ENCODE measurements at regions of chr20 and their contacts with region 1.

Region 1: GRCh38 chr20:23350196-23350903 is at the start of gene NXT1:
- DNase-seq: peak; percentile 98
- ATAC-seq: peak; percentile 93 to 94
- H3K4me3 ChIP-seq: peak within 1 kb of the TSS; percentile 81 to 96 (median 88)
- H3K27ac ChIP-seq: peak within 1 kb of the TSS; percentile 88 to 99 (median 96)
- H3K4me1 ChIP-seq: peaks cover 16 to 23% of the 10 kb centered on the region in 2 donors
- H3K27me3 ChIP-seq: no peaks in the 10 kb centered on the region
- CTCF ChIP-seq: no peak
- POLR2A ChIP-seq: peak; percentile 94 to 96
- total RNA-seq, gene NXT1: 15.2 to 17.9 (median 15.9) TPM

Region 2: GRCh38 chr20:22333885-22334545 is 1016.3 kb before region 1 on chr20:
- in situ Hi-C with region 1: loop called (anchors 25 kb)
- intact Hi-C with region 1: loop called (anchors 10 kb)
- DNase-seq: peak; percentile 25 to 27
- ATAC-seq: peak; percentile 82 to 83
- H3K4me3 ChIP-seq: no peak overlapping the region
- H3K27ac ChIP-seq: no peak overlapping the region
- H3K4me1 ChIP-seq: no peaks in the 10 kb centered on the region
- H3K27me3 ChIP-seq: peaks cover 0 to 8% (median 0%) of the 10 kb centered on the region in 3 donors
- CTCF ChIP-seq: peak; percentile 48 to 76 (median 58)
- POLR2A ChIP-seq: no peak

Region 3: DNA sequence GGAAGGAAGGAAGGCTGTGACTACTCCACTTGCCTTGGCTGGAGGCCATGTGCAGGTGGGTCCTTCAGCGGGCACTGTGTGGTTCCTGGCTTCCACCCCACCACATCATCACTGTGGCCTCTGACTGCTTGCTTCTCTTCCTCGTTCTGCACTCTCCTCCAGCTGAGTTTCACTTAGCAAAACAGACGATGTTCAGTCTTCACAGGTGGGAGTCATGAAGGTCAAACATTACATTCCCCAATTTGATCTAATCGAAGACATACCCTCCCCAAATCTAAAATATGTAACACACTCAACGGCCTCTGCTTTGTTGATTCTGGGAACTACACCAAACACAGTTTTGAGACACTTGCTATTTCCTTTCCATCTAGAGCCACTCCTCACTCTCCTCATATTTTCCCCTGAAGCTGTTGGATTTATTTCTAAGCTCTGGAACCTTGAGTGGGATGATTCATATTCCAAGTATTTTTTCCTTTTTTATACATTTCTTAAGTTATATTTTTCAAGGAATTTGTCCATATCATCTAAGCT is 633.5 kb before region 1 on chr20:
- in situ Hi-C with region 1: no loop called
- intact Hi-C with region 1: no loop called
- DNase-seq: no peak
- ATAC-seq: no peak
- H3K4me3 ChIP-seq: no peak overlapping the region
- H3K27ac ChIP-seq: no peak overlapping the region
- H3K4me1 ChIP-seq: no peaks in the 10 kb centered on the region
- H3K27me3 ChIP-seq: no peaks in the 10 kb centered on the region
- CTCF ChIP-seq: no peak
- POLR2A ChIP-seq: no peak

Region 4: GRCh38 chr20:23147964-23148730 is 202.2 kb before region 1 on chr20:
- in situ Hi-C with region 1: loop called in 2 of 4 experiments (anchors 10 kb)
- intact Hi-C with region 1: no loop called
- DNase-seq: peak; percentile 91 to 96
- ATAC-seq: peak; percentile 59 to 72
- H3K4me3 ChIP-seq: peak overlapping the region in 2 of 4 donors; percentile 15 to 36
- H3K27ac ChIP-seq: peak overlapping the region; percentile 94 to 99 (median 94)
- H3K4me1 ChIP-seq: peaks cover 91 to 97% of the 10 kb centered on the region in 2 donors
- H3K27me3 ChIP-seq: no peaks in the 10 kb centered on the region
- CTCF ChIP-seq: no peak
- POLR2A ChIP-seq: peak; percentile 89 to 91

Region 5: DNA sequence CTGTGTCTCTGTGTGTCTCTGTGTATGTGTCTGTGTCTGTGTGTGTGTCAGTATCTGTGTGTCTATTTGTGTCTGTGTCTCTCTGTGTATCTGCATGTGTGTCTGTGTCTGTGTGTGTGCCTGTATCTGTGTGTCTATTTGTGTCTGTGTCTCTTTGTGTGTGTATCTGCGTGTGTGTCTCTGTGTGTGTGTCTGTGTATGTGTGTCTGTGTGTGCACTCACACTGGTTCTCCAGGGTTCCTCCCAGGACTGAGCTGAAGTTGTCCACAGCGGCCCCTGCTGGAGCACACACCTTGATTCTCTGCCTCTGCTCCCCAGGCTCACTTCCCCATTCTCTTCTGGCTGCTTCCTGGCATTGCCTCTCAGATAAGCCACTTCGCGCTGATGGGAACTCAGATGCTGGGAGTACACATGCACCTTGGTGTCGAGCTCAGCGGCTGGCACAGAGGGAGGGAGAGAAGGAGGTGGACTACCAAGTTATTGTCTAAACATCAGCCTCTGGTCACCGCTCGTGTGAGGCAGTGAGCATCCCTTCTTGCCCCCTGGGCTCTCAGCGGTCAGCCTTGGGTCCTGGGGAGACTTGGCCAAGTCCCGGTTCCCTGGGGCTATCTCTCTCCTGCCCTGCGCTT is 104.7 kb before region 1 on chr20:
- in situ Hi-C with region 1: no loop called
- intact Hi-C with region 1: loop called (anchors 10 kb)
- DNase-seq: peak in 1 of 2 donors; percentile 24
- ATAC-seq: peak in 1 of 2 donors; percentile 27
- H3K4me3 ChIP-seq: no peak overlapping the region
- H3K27ac ChIP-seq: peak overlapping the region in 2 of 4 donors; percentile 39 to 50
- H3K4me1 ChIP-seq: peaks cover 0 to 5% of the 10 kb centered on the region in 2 donors
- H3K27me3 ChIP-seq: no peaks in the 10 kb centered on the region
- CTCF ChIP-seq: peak in 4 of 5 experiments; percentile 4 to 37 (median 27)
- POLR2A ChIP-seq: no peak

Region 6: GRCh38 chr20:23320317-23320716 is 30.0 kb before region 1 on chr20:
- in situ Hi-C with region 1: no loop called
- intact Hi-C with region 1: no loop called
- DNase-seq: no peak
- ATAC-seq: no peak
- H3K4me3 ChIP-seq: no peak overlapping the region
- H3K27ac ChIP-seq: no peak overlapping the region
- H3K4me1 ChIP-seq: no peaks in the 10 kb centered on the region
- H3K27me3 ChIP-seq: no peaks in the 10 kb centered on the region
- CTCF ChIP-seq: peak in 2 of 5 experiments; percentile 15 to 23
- POLR2A ChIP-seq: no peak

Region 7: DNA sequence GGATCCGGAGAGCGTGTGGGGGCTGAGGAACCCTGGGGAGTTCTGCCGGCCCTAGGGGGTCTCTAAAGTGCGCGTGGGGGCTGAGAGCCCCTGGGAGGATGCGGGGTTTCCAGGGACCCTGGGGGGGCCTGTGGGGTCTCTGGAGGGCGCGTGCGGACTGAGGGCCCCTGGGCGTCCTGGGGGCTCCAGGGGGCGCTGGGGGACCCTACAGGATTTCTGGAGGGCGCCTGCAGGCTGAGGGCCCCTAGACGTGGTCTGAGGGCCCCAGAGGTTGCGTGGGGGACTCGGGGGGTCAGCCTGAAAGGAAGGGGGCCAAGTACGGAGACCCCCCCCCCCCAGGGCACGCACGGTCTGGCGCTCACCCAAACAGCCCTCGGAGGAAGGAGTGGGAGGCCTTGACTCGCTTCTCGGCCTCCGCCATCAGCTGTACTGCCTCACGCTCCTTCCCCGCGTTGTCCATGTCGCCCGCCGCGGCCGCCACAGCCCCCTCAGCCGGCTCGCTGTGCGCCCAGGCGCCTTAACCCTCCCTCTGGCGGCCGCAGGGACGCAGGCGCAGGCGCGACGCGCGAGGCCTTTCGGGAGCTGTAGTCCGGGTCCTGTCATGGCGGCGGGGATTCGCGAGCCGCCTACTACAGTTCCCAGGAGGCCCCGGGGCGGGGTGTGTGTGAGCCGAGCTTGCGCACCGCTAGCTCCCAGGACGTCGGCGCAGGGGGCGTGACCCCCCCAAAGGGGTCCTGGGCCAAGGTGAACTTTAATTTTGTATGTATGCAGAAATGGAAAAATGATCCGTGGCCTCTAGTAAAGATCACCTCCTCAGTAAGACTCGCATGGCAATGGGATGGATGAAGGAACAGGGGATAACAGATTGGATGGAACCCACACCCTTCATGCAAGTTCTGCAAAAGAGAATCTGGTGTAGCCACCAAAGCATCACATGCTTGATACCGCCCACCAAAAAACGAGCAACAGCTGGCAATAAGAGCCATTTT is 70.9 kb after region 1 on chr20 and contains the start of gene NAPB:
- in situ Hi-C with region 1: no loop called
- intact Hi-C with region 1: loop called (anchors 1 kb)
- DNase-seq: peak; percentile 92
- ATAC-seq: peak; percentile 89 to 91
- H3K4me3 ChIP-seq: peak within 1 kb of the TSS; percentile 83 to 100 (median 96)
- H3K27ac ChIP-seq: peak within 1 kb of the TSS; percentile 97 to 99 (median 98)
- H3K4me1 ChIP-seq: peaks cover 19 to 30% of the 10 kb centered on the region in 2 donors
- H3K27me3 ChIP-seq: no peaks in the 10 kb centered on the region
- CTCF ChIP-seq: peak; percentile 62 to 92 (median 84)
- POLR2A ChIP-seq: peak; percentile 97
- total RNA-seq, gene NAPB: 3.2 to 8.3 (median 3.8) TPM

Region 8: DNA sequence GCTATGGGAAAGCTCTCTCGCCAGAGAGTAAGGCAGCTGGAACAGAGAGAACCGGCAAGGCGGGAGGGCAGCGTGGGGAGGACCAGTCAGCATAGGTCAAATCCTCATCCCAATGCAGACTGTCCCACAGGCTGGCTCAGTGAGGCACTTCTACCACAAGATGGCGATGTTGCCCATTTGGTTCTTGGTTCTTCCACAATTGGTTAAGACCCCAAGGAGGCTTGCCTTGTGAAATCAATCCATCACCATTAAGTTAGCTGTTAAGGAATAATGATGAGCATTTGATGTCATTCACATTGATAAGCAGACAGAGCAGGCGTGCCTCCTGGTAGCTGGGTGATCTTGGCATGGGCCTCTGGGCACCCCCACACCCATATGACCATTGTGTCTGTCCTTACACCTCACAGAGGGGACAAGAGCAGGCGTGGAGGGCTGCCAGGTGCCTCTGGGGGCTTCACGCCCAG is 91.5 kb after region 1 on chr20:
- in situ Hi-C with region 1: no loop called
- intact Hi-C with region 1: loop called (anchors 2 kb)
- DNase-seq: peak; percentile 35 to 51
- ATAC-seq: peak; percentile 75 to 87
- H3K4me3 ChIP-seq: no peak overlapping the region
- H3K27ac ChIP-seq: no peak overlapping the region
- H3K4me1 ChIP-seq: no peaks in the 10 kb centered on the region
- H3K27me3 ChIP-seq: no peaks in the 10 kb centered on the region
- CTCF ChIP-seq: peak; percentile 54 to 83 (median 71)
- POLR2A ChIP-seq: no peak

Region 9: DNA sequence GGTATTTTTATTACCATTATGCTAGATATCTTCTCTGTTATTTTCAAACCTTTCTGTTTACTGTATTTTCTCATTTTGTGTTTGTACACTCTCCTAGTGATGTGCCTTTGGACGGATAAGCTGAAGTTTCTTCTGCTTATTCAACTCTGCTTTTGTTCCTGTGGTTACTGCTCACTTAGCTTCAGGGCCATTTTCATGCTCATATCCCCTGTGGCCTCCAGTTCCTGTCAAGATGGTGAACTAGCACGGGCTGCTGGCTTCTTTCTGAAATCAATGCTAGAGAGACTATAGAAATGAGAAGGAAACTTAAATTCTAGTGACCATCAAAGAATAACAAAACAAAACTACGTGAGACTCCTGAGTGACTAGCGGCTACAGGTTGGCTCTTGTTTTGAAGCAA is 133.7 kb after region 1 on chr20:
- in situ Hi-C with region 1: no loop called
- intact Hi-C with region 1: no loop called
- DNase-seq: no peak
- ATAC-seq: no peak
- H3K4me3 ChIP-seq: no peak overlapping the region
- H3K27ac ChIP-seq: no peak overlapping the region
- H3K4me1 ChIP-seq: no peaks in the 10 kb centered on the region
- H3K27me3 ChIP-seq: no peaks in the 10 kb centered on the region
- CTCF ChIP-seq: no peak
- POLR2A ChIP-seq: no peak

Region 10: DNA sequence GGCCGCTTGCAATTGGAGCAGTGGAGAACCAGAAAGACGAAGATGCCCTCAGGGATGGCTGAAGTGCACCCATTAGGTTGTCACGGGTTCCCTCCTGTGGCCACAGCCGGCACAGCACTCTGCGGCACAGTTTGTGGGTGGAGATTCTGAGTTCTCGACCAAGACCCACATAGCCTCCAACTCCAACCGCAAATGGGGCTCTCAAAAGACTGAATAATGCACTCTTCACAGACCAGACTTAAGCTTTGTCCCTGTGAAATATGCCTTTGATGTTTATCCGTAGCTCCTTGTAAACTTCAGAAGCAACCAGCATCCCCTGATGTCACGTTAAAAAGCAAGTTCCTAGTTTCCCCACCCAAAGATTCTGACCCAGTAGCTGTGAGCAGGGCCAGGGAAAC is 256.3 kb after region 1 on chr20:
- in situ Hi-C with region 1: loop called in 1 of 4 experiments (anchors 10 kb)
- intact Hi-C with region 1: loop called (anchors 2 kb)
- DNase-seq: peak; percentile 54 to 68
- ATAC-seq: peak; percentile 87 to 95
- H3K4me3 ChIP-seq: no peak overlapping the region
- H3K27ac ChIP-seq: no peak overlapping the region
- H3K4me1 ChIP-seq: no peaks in the 10 kb centered on the region
- H3K27me3 ChIP-seq: no peaks in the 10 kb centered on the region
- CTCF ChIP-seq: peak; percentile 76 to 88 (median 81)
- POLR2A ChIP-seq: no peak

Region 11: DNA sequence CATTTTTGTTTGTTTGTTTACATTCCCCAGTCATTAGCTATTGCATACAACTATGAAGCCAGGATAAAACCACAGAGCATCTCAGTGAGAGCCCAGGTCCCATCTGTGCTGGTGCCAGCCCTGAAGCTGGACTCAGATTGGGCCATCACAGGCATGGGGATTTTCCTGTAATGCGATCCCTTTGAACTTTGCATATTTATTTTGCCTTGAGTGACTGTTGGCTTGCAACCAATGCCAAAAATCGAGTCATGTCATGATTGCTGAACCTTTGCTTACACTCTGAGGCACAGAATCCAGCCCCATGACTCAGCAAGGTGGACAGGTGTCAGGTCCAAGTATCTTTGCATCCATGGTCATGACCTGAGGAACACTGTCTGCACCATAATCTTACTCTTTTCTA is 684.5 kb after region 1 on chr20:
- in situ Hi-C with region 1: no loop called
- intact Hi-C with region 1: no loop called
- DNase-seq: no peak
- ATAC-seq: no peak
- H3K4me3 ChIP-seq: no peak overlapping the region
- H3K27ac ChIP-seq: no peak overlapping the region
- H3K4me1 ChIP-seq: no peaks in the 10 kb centered on the region
- H3K27me3 ChIP-seq: no peaks in the 10 kb centered on the region
- CTCF ChIP-seq: no peak
- POLR2A ChIP-seq: no peak